Endothelial cell of umbilical vein (primary cell): ENCODE measurements at regions of chr6 and their contacts with region 1.

Region 1: DNA sequence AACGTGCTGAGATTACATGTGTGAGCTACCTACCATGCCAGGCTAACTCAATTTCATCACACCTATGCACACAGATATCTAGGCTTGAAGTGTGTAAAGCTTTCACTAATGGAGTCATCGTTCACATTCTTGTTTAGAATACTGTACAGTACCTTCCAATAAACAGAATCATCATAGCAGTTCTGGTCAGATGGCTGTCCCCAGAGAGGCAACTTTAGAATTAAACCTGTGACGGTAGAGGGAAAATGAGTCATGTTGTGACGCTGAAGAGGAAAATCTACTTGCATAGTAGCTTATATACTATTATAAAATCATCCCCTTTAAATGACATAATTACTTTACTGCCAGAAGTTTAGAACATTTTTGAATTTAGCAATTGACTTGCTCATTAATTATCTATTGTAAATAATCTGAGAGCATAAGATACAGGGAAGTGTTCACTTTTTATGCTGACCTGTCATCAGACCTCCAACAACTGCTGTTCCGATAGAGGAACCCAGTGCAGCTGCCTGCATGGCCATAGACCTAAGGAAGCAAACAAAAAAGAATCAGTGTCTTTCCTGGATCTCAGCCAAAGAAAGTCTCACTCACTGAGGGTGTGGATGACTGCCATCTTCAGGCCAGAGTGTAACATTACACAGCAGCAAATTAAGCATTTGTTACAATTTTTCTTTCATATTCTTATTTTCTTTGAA is 29.8 kb downstream of the RHAG start:
- DNase-seq: peak; percentile 79
- H3K4me3 ChIP-seq: no peak overlapping the region
- H3K27ac ChIP-seq: no peak overlapping the region
- H3K4me1 ChIP-seq: peaks cover 3% of the 10 kb centered on the region
- H3K27me3 ChIP-seq: peaks cover 5 to 16% of the 10 kb centered on the region in 2 experiments
- CTCF ChIP-seq: peak; percentile 70 to 81
- POLR2A ChIP-seq: no peak

Region 2: DNA sequence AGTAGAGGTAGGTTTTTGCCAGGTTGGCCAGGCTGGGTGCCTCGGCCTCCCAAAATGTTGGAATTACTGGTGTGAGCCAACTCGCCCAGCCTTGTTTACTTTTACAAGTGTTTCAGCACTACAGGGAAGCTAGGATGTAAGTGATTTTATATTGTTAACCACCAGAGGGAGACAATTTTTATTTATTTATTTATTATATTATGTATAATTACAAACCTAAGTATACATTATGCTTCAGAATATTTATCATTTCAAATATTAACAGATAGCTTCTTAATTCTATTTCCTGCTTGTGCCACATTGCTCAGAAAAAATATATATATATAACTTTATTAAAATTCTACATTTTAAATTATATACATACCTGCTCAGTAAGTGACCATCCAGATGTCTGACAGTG is 153.6 kb before region 1 on chr6:
- CTCF ChIA-PET with region 1: interaction called, 11 read pairs
- POLR2A ChIA-PET with region 1: no interaction called
- dilution Hi-C with region 1: no loop called
- intact Hi-C with region 1: loop called (anchors 2 kb)
- DNase-seq: peak; percentile 8
- H3K4me3 ChIP-seq: no peak overlapping the region
- H3K27ac ChIP-seq: no peak overlapping the region
- H3K4me1 ChIP-seq: no peaks in the 10 kb centered on the region
- H3K27me3 ChIP-seq: no peaks in the 10 kb centered on the region
- CTCF ChIP-seq: peak in 1 of 2 donors; percentile 12
- POLR2A ChIP-seq: no peak

Region 3: DNA sequence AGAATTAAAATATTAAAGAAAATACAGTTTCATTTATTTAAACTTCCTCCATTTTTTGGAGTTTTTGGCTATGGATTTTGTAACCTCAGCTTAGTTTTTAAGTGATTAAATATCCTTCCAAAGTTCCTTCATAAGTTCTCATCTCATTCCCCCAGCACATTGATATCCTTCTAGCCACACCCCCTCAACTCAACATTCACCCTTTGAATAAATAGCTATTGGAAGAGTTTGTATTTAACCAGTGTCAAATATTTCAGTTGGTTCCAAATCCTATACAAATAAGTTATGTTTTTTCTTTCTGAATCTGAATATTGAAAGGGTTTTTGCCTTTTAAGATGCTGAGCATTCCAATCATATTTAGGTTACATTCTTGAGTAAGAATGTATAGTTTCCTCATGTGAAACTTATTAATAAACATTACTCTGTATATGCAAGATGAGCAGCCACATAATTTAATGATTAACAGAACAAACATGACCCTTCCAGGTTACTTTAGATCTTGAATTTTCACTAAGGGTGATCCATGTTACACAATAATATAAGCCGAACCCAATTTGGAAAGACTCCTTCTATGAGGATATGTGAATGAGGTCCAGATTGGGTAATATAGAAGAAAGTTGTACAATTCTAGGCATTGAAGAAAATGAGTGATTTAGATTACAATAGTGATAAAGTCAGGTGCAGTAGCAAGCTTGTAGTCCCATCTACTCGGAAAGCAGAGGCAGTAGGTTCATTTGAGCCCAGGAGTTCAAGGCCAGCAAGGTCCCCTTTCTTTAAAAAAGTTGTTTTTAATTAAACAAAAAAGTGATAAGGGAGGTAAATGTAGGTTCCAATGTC is 93.5 kb before region 1 on chr6:
- CTCF ChIA-PET with region 1: no interaction called
- POLR2A ChIA-PET with region 1: no interaction called
- dilution Hi-C with region 1: no loop called
- intact Hi-C with region 1: no loop called
- DNase-seq: no peak
- H3K4me3 ChIP-seq: no peak overlapping the region
- H3K27ac ChIP-seq: no peak overlapping the region
- H3K4me1 ChIP-seq: no peaks in the 10 kb centered on the region
- H3K27me3 ChIP-seq: no peaks in the 10 kb centered on the region
- CTCF ChIP-seq: no peak
- POLR2A ChIP-seq: no peak

Region 4: GRCh38 chr6:49541210-49541724 is 65.6 kb before region 1 on chr6:
- CTCF ChIA-PET with region 1: interaction called, 12 read pairs
- POLR2A ChIA-PET with region 1: no interaction called
- dilution Hi-C with region 1: no loop called
- intact Hi-C with region 1: no loop called
- DNase-seq: peak; percentile 67
- H3K4me3 ChIP-seq: no peak overlapping the region
- H3K27ac ChIP-seq: peak overlapping the region; percentile 41
- H3K4me1 ChIP-seq: peaks cover 14% of the 10 kb centered on the region
- H3K27me3 ChIP-seq: no peaks in the 10 kb centered on the region
- CTCF ChIP-seq: no peak
- POLR2A ChIP-seq: no peak

Region 5: GRCh38 chr6:49570474-49571079 is 36.3 kb before region 1 on chr6:
- CTCF ChIA-PET with region 1: interaction called, 22 read pairs
- POLR2A ChIA-PET with region 1: no interaction called
- dilution Hi-C with region 1: no loop called
- intact Hi-C with region 1: loop called (anchors 1 kb)
- DNase-seq: peak; percentile 67
- H3K4me3 ChIP-seq: no peak overlapping the region
- H3K27ac ChIP-seq: peak overlapping the region; percentile 55
- H3K4me1 ChIP-seq: peaks cover 36% of the 10 kb centered on the region
- H3K27me3 ChIP-seq: no peaks in the 10 kb centered on the region
- CTCF ChIP-seq: peak; percentile 20 to 25
- POLR2A ChIP-seq: no peak

Region 6: DNA sequence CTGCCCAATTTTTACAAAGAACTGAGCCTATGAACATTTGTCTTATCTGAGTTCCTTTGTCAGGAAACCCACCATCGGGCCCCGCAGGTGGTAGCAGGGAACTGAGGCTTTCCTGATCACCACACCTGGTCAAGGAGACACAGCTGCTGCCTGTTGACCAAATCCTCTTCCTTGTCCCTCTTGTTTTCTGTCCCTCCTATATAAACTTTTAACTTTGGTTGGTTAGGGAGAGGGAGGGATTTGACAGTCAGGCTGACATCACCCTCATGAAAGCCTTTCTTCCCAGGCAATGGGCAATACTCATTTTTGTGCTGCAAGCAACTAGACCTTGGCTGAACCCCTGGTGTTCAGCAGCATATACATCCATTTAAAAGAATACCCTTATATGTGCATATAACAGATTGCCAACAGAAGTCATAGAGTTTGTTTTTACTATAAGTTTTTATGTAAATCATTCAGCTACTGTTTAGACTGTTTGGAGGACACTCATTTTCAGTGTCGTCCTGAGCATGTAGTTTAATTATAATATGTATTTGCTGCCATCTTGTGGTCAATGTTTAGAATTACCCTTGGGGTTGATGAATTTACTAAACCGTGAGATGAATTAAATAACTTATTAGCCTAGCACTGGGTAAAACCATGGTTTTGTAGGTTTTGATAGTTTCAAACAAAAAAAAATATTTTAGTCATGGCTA is 242.5 kb after region 1 on chr6:
- CTCF ChIA-PET with region 1: interaction called, 4 read pairs
- POLR2A ChIA-PET with region 1: no interaction called
- dilution Hi-C with region 1: no loop called
- intact Hi-C with region 1: loop called (anchors 5 kb)
- DNase-seq: peak; percentile 47
- H3K4me3 ChIP-seq: no peak overlapping the region
- H3K27ac ChIP-seq: no peak overlapping the region
- H3K4me1 ChIP-seq: no peaks in the 10 kb centered on the region
- H3K27me3 ChIP-seq: no peaks in the 10 kb centered on the region
- CTCF ChIP-seq: peak; percentile 9 to 19
- POLR2A ChIP-seq: no peak